Activated CD8-positive, alpha-beta T cell treated with anti-CD3 and anti-CD28 coated beads for 36 hours (primary cell): ENCODE measurements at regions of chr5 and their contacts with region 1.

Region 1: GRCh38 chr5:1641560-1642166 is 117.9 kb upstream of the LPCAT1 start:
- DNase-seq: peak; percentile 94
- ATAC-seq: peak; percentile 96
- H3K4me3 Mint-ChIP-seq: no peak overlapping the region
- H3K27ac Mint-ChIP-seq: no peak overlapping the region
- H3K4me1 Mint-ChIP-seq: peaks cover 11% of the 10 kb centered on the region
- H3K27me3 Mint-ChIP-seq: peaks cover 32% of the 10 kb centered on the region
- CTCF ChIP-seq: peak; percentile 99

Region 2: GRCh38 chr5:1167728-1168709 is 473.6 kb before region 1 on chr5:
- CTCF ChIA-PET with region 1: interaction called, 25 read pairs
- POLR2A ChIA-PET with region 1: no interaction called
- intact Hi-C with region 1: loop called (anchors 5 kb)
- DNase-seq: peak; percentile 79
- ATAC-seq: peak; percentile 87
- H3K4me3 Mint-ChIP-seq: peak overlapping the region; percentile 55
- H3K27ac Mint-ChIP-seq: no peak overlapping the region
- H3K4me1 Mint-ChIP-seq: peaks cover 5% of the 10 kb centered on the region
- H3K27me3 Mint-ChIP-seq: peaks cover 10% of the 10 kb centered on the region
- CTCF ChIP-seq: peak; percentile 80

Region 3: GRCh38 chr5:1385395-1386273 is 256.0 kb before region 1 on chr5:
- CTCF ChIA-PET with region 1: interaction called, 13 read pairs
- POLR2A ChIA-PET with region 1: no interaction called
- intact Hi-C with region 1: loop called (anchors 10 kb)
- DNase-seq: peak; percentile 88
- ATAC-seq: peak; percentile 96
- H3K4me3 Mint-ChIP-seq: peak overlapping the region; percentile 80
- H3K27ac Mint-ChIP-seq: peak overlapping the region; percentile 87
- H3K4me1 Mint-ChIP-seq: peaks cover 12% of the 10 kb centered on the region
- H3K27me3 Mint-ChIP-seq: no peaks in the 10 kb centered on the region
- CTCF ChIP-seq: no peak

Region 4: GRCh38 chr5:1401536-1402138 is 240.0 kb before region 1 on chr5:
- CTCF ChIA-PET with region 1: no interaction called
- POLR2A ChIA-PET with region 1: no interaction called
- intact Hi-C with region 1: no loop called
- DNase-seq: no peak
- ATAC-seq: no peak
- H3K4me3 Mint-ChIP-seq: no peak overlapping the region
- H3K27ac Mint-ChIP-seq: no peak overlapping the region
- H3K4me1 Mint-ChIP-seq: no peaks in the 10 kb centered on the region
- H3K27me3 Mint-ChIP-seq: peaks cover 12% of the 10 kb centered on the region
- CTCF ChIP-seq: no peak

Region 5: GRCh38 chr5:1488943-1489680 is 152.6 kb before region 1 on chr5:
- CTCF ChIA-PET with region 1: interaction called, 12 read pairs
- POLR2A ChIA-PET with region 1: no interaction called
- intact Hi-C with region 1: loop called (anchors 5 kb)
- DNase-seq: peak; percentile 77
- ATAC-seq: peak; percentile 82
- H3K4me3 Mint-ChIP-seq: peak overlapping the region; percentile 19
- H3K27ac Mint-ChIP-seq: peak overlapping the region; percentile 77
- H3K4me1 Mint-ChIP-seq: peaks cover 80% of the 10 kb centered on the region
- H3K27me3 Mint-ChIP-seq: no peaks in the 10 kb centered on the region
- CTCF ChIP-seq: peak; percentile 17

Region 6: DNA sequence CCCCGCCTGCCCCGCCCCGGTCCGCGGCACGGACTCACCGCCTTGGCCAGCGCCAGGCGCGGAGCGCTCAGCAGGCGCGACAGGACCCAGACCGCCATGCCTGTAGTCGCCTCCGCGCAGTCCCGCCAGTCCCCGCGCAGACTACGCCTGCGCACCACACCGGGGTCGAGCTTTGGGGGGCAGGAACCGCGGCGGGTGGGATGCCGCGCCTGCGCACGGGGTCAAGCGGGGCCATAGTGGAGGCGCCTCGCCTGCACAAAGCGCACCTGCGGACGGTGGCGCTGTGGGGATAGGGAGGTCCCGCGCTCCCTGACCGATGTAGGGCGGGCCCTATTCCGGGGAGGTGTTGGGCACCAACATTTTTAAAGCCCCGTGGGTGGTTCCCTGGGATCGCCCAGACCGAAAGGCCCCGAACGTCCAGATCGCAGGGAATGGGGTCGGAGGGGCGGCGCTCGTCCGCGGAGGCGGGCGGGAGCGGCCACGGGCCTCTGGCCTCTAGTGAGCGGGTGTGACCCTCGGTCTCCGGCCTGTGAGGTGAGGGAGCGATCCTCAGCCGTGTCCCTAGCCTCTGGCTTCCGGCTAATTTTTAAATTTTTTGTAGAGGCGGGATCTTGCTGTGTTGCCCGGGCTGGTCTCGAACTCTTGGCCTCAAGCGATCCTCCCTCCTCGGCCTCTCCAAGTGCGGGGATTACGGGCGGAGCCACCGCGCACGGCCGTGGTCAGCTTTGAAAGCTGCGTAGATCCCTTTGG is 47.1 kb before region 1 on chr5:
- CTCF ChIA-PET with region 1: interaction called, 3 read pairs
- POLR2A ChIA-PET with region 1: no interaction called
- intact Hi-C with region 1: loop called (anchors 5 kb)
- DNase-seq: peak; percentile 90
- ATAC-seq: peak; percentile 97
- H3K4me3 Mint-ChIP-seq: peak overlapping the region; percentile 80
- H3K27ac Mint-ChIP-seq: peak overlapping the region; percentile 64
- H3K4me1 Mint-ChIP-seq: peaks cover 23% of the 10 kb centered on the region
- H3K27me3 Mint-ChIP-seq: no peaks in the 10 kb centered on the region
- CTCF ChIP-seq: peak; percentile 55

Region 7: GRCh38 chr5:1917832-1918487 is 276.3 kb after region 1 on chr5:
- CTCF ChIA-PET with region 1: no interaction called
- POLR2A ChIA-PET with region 1: no interaction called
- intact Hi-C with region 1: no loop called
- DNase-seq: no peak
- ATAC-seq: no peak
- H3K4me3 Mint-ChIP-seq: no peak overlapping the region
- H3K27ac Mint-ChIP-seq: no peak overlapping the region
- H3K4me1 Mint-ChIP-seq: no peaks in the 10 kb centered on the region
- H3K27me3 Mint-ChIP-seq: peaks cover 1% of the 10 kb centered on the region
- CTCF ChIP-seq: no peak